Activated B cell treated with CpG ODN at 0.5 μM for 24 hours (primary cell): ENCODE measurements at regions of chr21 and their contacts with region 1.

Region 1: DNA sequence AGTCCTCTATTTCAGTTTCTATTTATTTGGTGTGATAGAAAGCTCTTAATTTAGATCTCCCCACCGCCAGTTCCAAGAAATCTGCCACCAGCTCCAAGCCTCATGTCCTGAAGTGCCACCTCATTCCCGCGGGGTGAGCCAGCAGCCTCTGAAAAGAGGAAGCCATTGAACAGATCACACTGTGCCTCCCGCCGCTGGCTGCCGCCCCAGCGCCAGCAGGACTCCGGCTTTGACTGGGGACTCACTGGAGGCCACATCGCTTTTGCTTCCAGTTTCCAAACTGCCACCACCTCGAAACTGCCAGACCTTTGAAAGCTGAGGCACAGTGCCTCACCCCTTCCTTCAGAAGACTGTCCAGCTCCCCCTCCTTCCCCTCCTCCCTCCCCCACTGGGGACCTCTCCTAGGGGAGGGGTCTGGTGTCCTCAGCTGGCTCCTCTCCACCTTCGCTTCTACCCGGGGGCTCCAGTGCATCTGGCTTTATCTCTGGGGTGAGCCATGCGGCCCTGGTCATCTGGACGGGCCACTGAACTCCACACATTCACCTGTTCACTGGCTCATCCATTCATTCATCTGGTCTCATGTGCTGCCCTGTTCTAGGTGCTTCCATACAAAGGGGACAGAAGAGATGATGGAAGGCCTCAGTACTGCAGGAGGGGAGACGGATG is 58.9 kb downstream of the VPS26C start:
- DNase-seq: peak; percentile 47
- ATAC-seq: peak; percentile 65
- H3K4me3 Mint-ChIP-seq: peak overlapping the region; percentile 77
- H3K27ac Mint-ChIP-seq: peak overlapping the region; percentile 84
- H3K4me1 Mint-ChIP-seq: peaks cover 45% of the 10 kb centered on the region
- H3K27me3 Mint-ChIP-seq: no peaks in the 10 kb centered on the region
- CTCF ChIP-seq: no peak

Region 2: GRCh38 chr21:36927719-36928117 is 280.5 kb before region 1 on chr21:
- CTCF ChIA-PET with region 1: no interaction called
- POLR2A ChIA-PET with region 1: no interaction called
- intact Hi-C with region 1: no loop called
- DNase-seq: peak; percentile 46
- ATAC-seq: peak; percentile 64
- H3K4me3 Mint-ChIP-seq: no peak overlapping the region
- H3K27ac Mint-ChIP-seq: no peak overlapping the region
- H3K4me1 Mint-ChIP-seq: no peaks in the 10 kb centered on the region
- H3K27me3 Mint-ChIP-seq: no peaks in the 10 kb centered on the region
- CTCF ChIP-seq: peak; percentile 44

Region 3: GRCh38 chr21:37166733-37167132 is 41.5 kb before region 1 on chr21:
- CTCF ChIA-PET with region 1: no interaction called
- POLR2A ChIA-PET with region 1: no interaction called
- intact Hi-C with region 1: no loop called
- DNase-seq: no peak
- ATAC-seq: no peak
- H3K4me3 Mint-ChIP-seq: no peak overlapping the region
- H3K27ac Mint-ChIP-seq: peak overlapping the region; percentile 19
- H3K4me1 Mint-ChIP-seq: no peaks in the 10 kb centered on the region
- H3K27me3 Mint-ChIP-seq: no peaks in the 10 kb centered on the region
- CTCF ChIP-seq: no peak

Region 4: GRCh38 chr21:37220981-37221664 is 12.9 kb after region 1 on chr21:
- CTCF ChIA-PET with region 1: interaction called, 3 read pairs
- POLR2A ChIA-PET with region 1: interaction called, 17 read pairs
- intact Hi-C with region 1: loop called (anchors 1 kb)
- DNase-seq: peak; percentile 90
- ATAC-seq: peak; percentile 87
- H3K4me3 Mint-ChIP-seq: peak overlapping the region; percentile 91
- H3K27ac Mint-ChIP-seq: peak overlapping the region; percentile 88
- H3K4me1 Mint-ChIP-seq: peaks cover 31% of the 10 kb centered on the region
- H3K27me3 Mint-ChIP-seq: no peaks in the 10 kb centered on the region
- CTCF ChIP-seq: no peak

Region 5: GRCh38 chr21:37380349-37381323 is 172.4 kb after region 1 on chr21:
- CTCF ChIA-PET with region 1: no interaction called
- POLR2A ChIA-PET with region 1: no interaction called
- intact Hi-C with region 1: no loop called
- DNase-seq: no peak
- ATAC-seq: no peak
- H3K4me3 Mint-ChIP-seq: no peak overlapping the region
- H3K27ac Mint-ChIP-seq: no peak overlapping the region
- H3K4me1 Mint-ChIP-seq: peaks cover 88% of the 10 kb centered on the region
- H3K27me3 Mint-ChIP-seq: no peaks in the 10 kb centered on the region
- CTCF ChIP-seq: no peak